IMR-90 (cell line): ENCODE measurements at regions of chr22 and their contacts with region 1.

Region 1: DNA sequence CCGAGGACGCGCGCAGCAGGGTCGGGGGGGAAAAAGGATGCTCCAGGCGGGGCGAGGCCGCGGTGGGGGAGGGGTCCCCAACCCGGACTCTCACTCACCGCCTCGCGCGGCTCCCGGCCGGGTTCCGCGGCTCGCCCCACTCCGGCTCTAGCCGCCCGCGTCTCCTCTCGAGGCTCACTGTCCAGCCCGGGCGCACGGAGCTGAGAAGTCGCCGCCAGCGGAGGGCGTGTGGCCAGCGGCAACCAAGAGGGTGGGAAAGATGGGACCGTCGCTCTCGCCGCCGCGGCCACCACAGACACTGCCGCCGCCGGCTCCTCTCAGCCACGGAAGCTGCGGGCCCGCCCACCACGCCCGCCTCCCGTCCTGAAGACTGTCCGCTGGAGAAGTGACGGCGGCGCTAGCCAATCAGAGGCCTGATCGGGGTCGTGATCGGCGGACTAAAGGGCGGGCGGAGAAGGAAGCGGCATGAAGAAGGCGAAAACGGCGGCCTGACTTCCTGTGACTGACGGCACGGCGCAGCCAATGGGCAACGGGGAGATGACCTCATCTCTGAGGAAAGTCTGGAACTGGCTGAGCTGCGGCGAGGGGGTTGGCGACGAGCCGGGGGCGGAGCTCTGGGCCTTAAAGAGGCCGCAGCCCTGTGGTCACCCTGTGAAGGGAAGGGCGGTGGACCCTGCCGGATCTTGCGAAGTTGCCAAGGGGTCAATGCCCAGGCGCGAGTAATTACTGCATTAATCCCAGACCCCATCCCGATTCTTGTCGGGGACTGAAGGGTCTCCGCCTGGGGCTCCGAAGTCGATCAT is at the start of gene MRTFA:
- DNase-seq: peak; percentile 100
- ATAC-seq: peak; percentile 94
- H3K4me3 ChIP-seq: peak within 1 kb of the TSS; percentile 69
- H3K27ac ChIP-seq: peak within 1 kb of the TSS; percentile 86
- H3K4me1 ChIP-seq: peaks cover 9% of the 10 kb centered on the region
- H3K27me3 ChIP-seq: no peaks in the 10 kb centered on the region
- CTCF ChIP-seq: no peak
- POLR2A ChIP-seq: peak; percentile 96
- RAD21 ChIP-seq: no peak
- total RNA-seq, gene MRTFA: 12.5 and 15.3 TPM in 2 replicates

Region 2: DNA sequence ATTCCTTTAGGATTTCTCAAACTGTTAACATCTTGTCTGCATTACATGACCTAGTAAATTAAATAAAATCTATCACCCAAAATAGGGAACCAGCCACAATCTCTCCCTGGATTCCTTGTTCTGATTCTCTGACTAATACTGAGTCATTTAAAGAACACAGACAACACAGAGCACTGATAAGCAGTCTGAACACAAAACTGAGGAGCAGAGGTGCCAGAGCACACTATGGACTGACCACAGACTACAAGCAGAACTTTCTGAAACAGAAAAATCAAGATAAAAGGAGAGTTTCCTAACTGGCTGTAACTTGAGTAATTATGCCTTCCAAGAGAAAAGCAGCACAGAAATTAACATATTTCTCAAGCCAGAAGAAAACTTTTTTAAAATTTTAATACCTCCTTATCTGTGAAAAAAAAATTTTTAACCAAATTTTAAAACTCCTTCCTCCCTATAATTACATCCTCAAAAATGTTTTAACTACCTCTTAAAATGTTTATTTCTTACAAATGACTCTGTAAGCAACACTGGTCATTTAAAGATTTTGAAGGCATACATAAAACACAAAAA is 137.3 kb before region 1 on chr22:
- CTCF ChIA-PET with region 1: no interaction called
- POLR2A ChIA-PET with region 1: no interaction called
- dilution Hi-C with region 1: no loop called
- in situ Hi-C with region 1: no loop called
- intact Hi-C with region 1: loop called (anchors 1 kb)
- DNase-seq: peak; percentile 99
- ATAC-seq: peak; percentile 87
- H3K4me3 ChIP-seq: no peak overlapping the region
- H3K27ac ChIP-seq: peak overlapping the region; percentile 94; the same call in 1 of the 2 replicates
- H3K4me1 ChIP-seq: peaks cover 15% of the 10 kb centered on the region
- H3K27me3 ChIP-seq: no peaks in the 10 kb centered on the region
- CTCF ChIP-seq: no peak
- POLR2A ChIP-seq: peak; percentile 69
- RAD21 ChIP-seq: peak; percentile 35

Region 3: GRCh38 chr22:40509401-40510134 is 127.0 kb before region 1 on chr22:
- CTCF ChIA-PET with region 1: no interaction called
- POLR2A ChIA-PET with region 1: no interaction called
- dilution Hi-C with region 1: no loop called
- in situ Hi-C with region 1: no loop called
- intact Hi-C with region 1: loop called (anchors 2 kb)
- DNase-seq: peak; percentile 96
- ATAC-seq: peak; percentile 40
- H3K4me3 ChIP-seq: no peak overlapping the region
- H3K27ac ChIP-seq: peak overlapping the region; percentile 78
- H3K4me1 ChIP-seq: peaks cover 36% of the 10 kb centered on the region
- H3K27me3 ChIP-seq: no peaks in the 10 kb centered on the region
- CTCF ChIP-seq: no peak
- POLR2A ChIP-seq: peak; percentile 52; the same call in 1 of the 2 replicates
- RAD21 ChIP-seq: no peak

Region 4: GRCh38 chr22:40525249-40525884 is 111.2 kb before region 1 on chr22:
- CTCF ChIA-PET with region 1: interaction called, 17 read pairs
- POLR2A ChIA-PET with region 1: no interaction called
- dilution Hi-C with region 1: no loop called
- in situ Hi-C with region 1: loop called (anchors 5 kb)
- intact Hi-C with region 1: loop called (anchors 5 kb)
- DNase-seq: peak; percentile 46
- ATAC-seq: no peak
- H3K4me3 ChIP-seq: no peak overlapping the region
- H3K27ac ChIP-seq: no peak overlapping the region
- H3K4me1 ChIP-seq: peaks cover 7% of the 10 kb centered on the region; the same call in 1 of the 2 replicates
- H3K27me3 ChIP-seq: no peaks in the 10 kb centered on the region
- CTCF ChIP-seq: peak; percentile 63
- POLR2A ChIP-seq: no peak
- RAD21 ChIP-seq: peak; percentile 58

Region 5: GRCh38 chr22:40533712-40534378 is 102.7 kb before region 1 on chr22:
- CTCF ChIA-PET with region 1: no interaction called
- POLR2A ChIA-PET with region 1: no interaction called
- dilution Hi-C with region 1: no loop called
- in situ Hi-C with region 1: loop called (anchors 5 kb)
- intact Hi-C with region 1: loop called (anchors 5 kb)
- DNase-seq: peak; percentile 74
- ATAC-seq: peak; percentile 57
- H3K4me3 ChIP-seq: peak overlapping the region; percentile 3; the same call in 1 of the 2 replicates
- H3K27ac ChIP-seq: peak overlapping the region; percentile 8; the same call in 1 of the 2 replicates
- H3K4me1 ChIP-seq: peaks cover 19% of the 10 kb centered on the region
- H3K27me3 ChIP-seq: no peaks in the 10 kb centered on the region
- CTCF ChIP-seq: no peak
- POLR2A ChIP-seq: no peak
- RAD21 ChIP-seq: no peak

Region 6: DNA sequence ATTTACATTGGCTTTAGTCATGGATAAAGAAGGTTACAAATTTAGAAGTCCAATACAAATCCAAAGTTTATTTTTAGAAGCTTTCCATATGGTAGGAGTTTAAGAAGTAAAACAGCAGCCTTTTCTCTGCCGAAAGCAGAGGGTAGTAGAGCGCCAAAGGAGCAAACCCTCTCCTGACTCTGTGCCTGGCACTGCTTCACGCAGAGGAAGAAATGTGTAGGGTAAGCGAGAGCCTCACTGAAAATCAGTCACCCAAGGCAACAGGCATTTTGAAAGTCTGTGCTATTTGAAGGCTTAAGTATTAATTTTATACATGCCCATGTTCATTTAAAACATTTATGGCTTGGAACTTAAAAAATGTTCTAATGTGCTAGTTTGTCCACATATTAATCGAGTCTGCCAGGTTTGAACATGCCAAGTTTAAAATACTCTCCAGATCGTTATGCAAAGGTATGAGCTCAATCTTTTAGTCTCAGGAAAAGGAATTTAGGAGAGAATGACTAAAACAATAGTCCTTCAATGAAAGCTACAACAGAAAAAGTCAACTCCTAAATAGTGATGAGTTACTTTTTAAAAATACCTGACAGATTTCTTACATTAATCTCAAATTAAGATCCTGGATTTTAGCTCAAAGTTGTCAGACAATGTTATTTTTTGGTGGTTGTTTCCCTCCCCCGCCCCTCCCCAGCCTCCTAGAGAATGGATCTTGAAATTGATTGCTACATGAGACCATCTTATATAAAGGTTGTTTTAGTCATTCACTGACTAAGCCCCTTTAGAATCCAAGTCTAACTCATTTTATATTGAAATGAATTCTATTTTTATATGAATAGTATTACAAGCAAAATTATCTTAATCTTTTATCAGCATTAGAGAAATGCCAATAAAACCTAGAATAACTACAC is 38.8 kb before region 1 on chr22:
- CTCF ChIA-PET with region 1: no interaction called
- POLR2A ChIA-PET with region 1: no interaction called
- dilution Hi-C with region 1: no loop called
- in situ Hi-C with region 1: no loop called
- intact Hi-C with region 1: loop called (anchors 5 kb)
- DNase-seq: peak; percentile 41
- ATAC-seq: peak; percentile 70
- H3K4me3 ChIP-seq: no peak overlapping the region
- H3K27ac ChIP-seq: peak overlapping the region; percentile 76; the same call in 1 of the 2 replicates
- H3K4me1 ChIP-seq: peaks cover 9% of the 10 kb centered on the region
- H3K27me3 ChIP-seq: no peaks in the 10 kb centered on the region
- CTCF ChIP-seq: no peak
- POLR2A ChIP-seq: no peak
- RAD21 ChIP-seq: no peak

Region 7: DNA sequence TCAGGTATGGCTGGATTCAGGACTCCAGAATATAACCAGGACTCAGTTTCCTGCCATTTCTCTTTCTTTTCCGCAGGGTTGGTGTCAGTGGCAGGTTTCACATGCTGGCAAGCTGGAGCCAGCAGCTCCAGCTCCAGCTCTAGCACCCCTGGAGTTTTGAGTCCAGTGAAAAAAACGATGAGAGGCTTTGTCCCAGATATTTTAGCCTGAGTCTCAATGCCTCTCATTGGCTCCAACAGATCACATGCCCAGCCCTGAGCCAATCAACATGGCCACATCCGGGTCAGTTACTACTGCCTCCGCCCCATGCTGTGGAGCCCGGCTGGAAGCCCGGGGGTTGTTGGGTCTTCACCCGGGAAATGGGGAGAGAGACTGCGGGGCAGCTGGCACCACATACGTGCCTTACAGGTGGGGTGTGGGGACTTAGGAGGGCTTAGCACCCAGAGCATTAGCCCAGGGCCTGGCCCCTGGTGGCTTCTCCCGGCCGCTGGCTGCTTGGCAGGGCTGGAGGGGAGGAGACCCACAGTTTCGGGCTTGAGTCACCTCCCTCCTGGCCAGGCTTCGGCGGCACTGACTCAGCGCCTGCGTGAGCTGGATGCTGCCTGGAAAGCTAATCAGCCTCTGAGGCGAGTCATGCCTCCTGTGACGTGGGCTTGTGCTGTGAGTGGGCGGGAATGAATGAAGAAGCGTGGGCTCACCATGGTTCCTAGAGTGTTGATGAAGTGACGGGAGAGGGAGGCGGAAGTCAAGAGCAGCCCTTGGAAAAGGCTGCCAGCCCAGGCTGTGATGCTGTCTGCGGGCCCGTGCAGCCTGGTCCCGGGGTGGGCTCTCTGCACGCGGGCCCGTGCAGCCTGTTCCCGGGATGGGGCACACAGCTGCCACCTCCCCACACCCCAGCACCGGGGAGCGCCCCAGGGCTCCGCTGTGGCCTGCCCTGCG is 15.3 kb after region 1 on chr22:
- CTCF ChIA-PET with region 1: no interaction called
- POLR2A ChIA-PET with region 1: no interaction called
- dilution Hi-C with region 1: no loop called
- in situ Hi-C with region 1: no loop called
- intact Hi-C with region 1: no loop called
- DNase-seq: peak; percentile 100
- ATAC-seq: peak; percentile 94
- H3K4me3 ChIP-seq: peak overlapping the region; percentile 59
- H3K27ac ChIP-seq: peak overlapping the region; percentile 93
- H3K4me1 ChIP-seq: peaks cover 13% of the 10 kb centered on the region
- H3K27me3 ChIP-seq: no peaks in the 10 kb centered on the region
- CTCF ChIP-seq: no peak
- POLR2A ChIP-seq: peak; percentile 90
- RAD21 ChIP-seq: peak; percentile 13; the same call in 1 of the 2 replicates

Region 8: GRCh38 chr22:40694411-40694810 is 57.8 kb after region 1 on chr22:
- CTCF ChIA-PET with region 1: no interaction called
- POLR2A ChIA-PET with region 1: no interaction called
- dilution Hi-C with region 1: no loop called
- in situ Hi-C with region 1: no loop called
- intact Hi-C with region 1: no loop called
- DNase-seq: no peak
- ATAC-seq: no peak
- H3K4me3 ChIP-seq: no peak overlapping the region
- H3K27ac ChIP-seq: no peak overlapping the region
- H3K4me1 ChIP-seq: no peaks in the 10 kb centered on the region; the same call in 1 of the 2 replicates
- H3K27me3 ChIP-seq: peaks cover 4% of the 10 kb centered on the region; the same call in 1 of the 2 replicates
- CTCF ChIP-seq: no peak
- POLR2A ChIP-seq: no peak
- RAD21 ChIP-seq: no peak

Region 9: DNA sequence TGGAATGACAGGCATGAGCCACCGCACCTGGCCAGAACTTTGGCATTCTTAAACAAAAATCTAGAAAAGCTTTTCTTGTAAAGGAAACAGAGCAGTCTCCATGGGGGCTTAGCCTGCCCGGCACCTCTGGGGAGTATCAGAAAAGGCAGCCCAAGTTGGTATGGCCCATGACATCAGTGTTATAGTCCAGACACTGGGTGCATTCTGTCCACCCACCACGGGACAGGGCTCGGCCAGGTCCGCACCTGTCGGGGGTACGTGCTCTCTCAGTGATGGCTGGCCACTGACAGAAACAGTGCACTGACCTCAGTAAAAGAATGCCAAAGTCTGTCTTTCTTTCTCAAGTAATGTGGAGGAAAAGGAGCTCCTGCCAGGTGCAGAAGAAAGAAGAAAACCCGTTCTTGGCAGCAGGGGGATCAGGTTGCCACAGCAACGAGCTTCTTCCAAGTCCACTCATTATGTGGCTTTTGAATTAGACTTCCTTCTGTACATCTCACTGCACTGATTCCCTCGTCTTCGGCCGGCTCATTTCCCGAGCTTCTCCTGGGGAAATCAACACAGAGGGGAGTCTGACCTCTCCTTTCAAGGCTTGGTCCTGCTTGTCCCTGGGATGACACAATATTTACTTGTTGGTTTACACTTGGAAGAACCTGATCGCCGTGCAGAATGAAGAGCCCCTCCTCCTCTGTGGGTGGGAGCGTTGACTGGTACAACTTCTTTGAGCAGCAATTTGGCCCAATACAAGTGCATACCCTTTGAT is 77.8 kb after region 1 on chr22:
- CTCF ChIA-PET with region 1: no interaction called
- POLR2A ChIA-PET with region 1: no interaction called
- dilution Hi-C with region 1: no loop called
- in situ Hi-C with region 1: no loop called
- intact Hi-C with region 1: no loop called
- DNase-seq: peak; percentile 68
- ATAC-seq: no peak
- H3K4me3 ChIP-seq: no peak overlapping the region
- H3K27ac ChIP-seq: no peak overlapping the region
- H3K4me1 ChIP-seq: peaks cover 13% of the 10 kb centered on the region; the same call in 1 of the 2 replicates
- H3K27me3 ChIP-seq: no peaks in the 10 kb centered on the region
- CTCF ChIP-seq: no peak
- POLR2A ChIP-seq: no peak
- RAD21 ChIP-seq: no peak

Region 10: GRCh38 chr22:40877488-40877887 is 240.9 kb after region 1 on chr22:
- CTCF ChIA-PET with region 1: no interaction called
- POLR2A ChIA-PET with region 1: no interaction called
- dilution Hi-C with region 1: no loop called
- in situ Hi-C with region 1: no loop called
- intact Hi-C with region 1: no loop called
- DNase-seq: no peak
- ATAC-seq: no peak
- H3K4me3 ChIP-seq: no peak overlapping the region
- H3K27ac ChIP-seq: no peak overlapping the region
- H3K4me1 ChIP-seq: no peaks in the 10 kb centered on the region
- H3K27me3 ChIP-seq: no peaks in the 10 kb centered on the region
- CTCF ChIP-seq: no peak
- POLR2A ChIP-seq: no peak
- RAD21 ChIP-seq: no peak